ENCODE measurements at regions of chr11 and their contacts with region 1.

Region 1: GRCh38 chr11:65615229-65615941 is at the start of gene PCNX3:
- DNase-seq: peak; percentile 99 to 100 (median 100)
- ATAC-seq: peak; percentile 87
- H3K4me3 ChIP-seq: peak within 1 kb of the TSS; percentile 93
- H3K4me3 Mint-ChIP-seq: peak within 1 kb of the TSS; percentile 98
- H3K27ac ChIP-seq: peak within 1 kb of the TSS; percentile 94
- H3K27ac Mint-ChIP-seq: peak within 1 kb of the TSS; percentile 93
- H3K4me1 ChIP-seq: peaks cover 67% of the 10 kb centered on the region
- H3K4me1 Mint-ChIP-seq: peaks cover 46% of the 10 kb centered on the region
- H3K27me3 ChIP-seq: no peaks in the 10 kb centered on the region
- H3K27me3 Mint-ChIP-seq: no peaks in the 10 kb centered on the region
- CTCF ChIP-seq: no peak
- total RNA-seq, gene PCNX3: 37.3 to 40.5 TPM

Region 2: GRCh38 chr11:65540297-65541092 is 74.9 kb before region 1 on chr11:
- CTCF ChIA-PET with region 1: interaction called, 7 read pairs
- POLR2A ChIA-PET with region 1: interaction called, 32 read pairs
- intact Hi-C with region 1: no loop called
- DNase-seq: peak; percentile 81 to 94 (median 85)
- ATAC-seq: peak; percentile 82
- H3K4me3 ChIP-seq: peak overlapping the region; percentile 80
- H3K4me3 Mint-ChIP-seq: peak overlapping the region; percentile 90
- H3K27ac ChIP-seq: peak overlapping the region; percentile 14 to 64
- H3K27ac Mint-ChIP-seq: peak overlapping the region; percentile 65
- H3K4me1 ChIP-seq: peaks cover 23% of the 10 kb centered on the region
- H3K4me1 Mint-ChIP-seq: peaks cover 25% of the 10 kb centered on the region
- H3K27me3 ChIP-seq: no peaks in the 10 kb centered on the region
- H3K27me3 Mint-ChIP-seq: no peaks in the 10 kb centered on the region
- CTCF ChIP-seq: peak; percentile 79

Region 3: DNA sequence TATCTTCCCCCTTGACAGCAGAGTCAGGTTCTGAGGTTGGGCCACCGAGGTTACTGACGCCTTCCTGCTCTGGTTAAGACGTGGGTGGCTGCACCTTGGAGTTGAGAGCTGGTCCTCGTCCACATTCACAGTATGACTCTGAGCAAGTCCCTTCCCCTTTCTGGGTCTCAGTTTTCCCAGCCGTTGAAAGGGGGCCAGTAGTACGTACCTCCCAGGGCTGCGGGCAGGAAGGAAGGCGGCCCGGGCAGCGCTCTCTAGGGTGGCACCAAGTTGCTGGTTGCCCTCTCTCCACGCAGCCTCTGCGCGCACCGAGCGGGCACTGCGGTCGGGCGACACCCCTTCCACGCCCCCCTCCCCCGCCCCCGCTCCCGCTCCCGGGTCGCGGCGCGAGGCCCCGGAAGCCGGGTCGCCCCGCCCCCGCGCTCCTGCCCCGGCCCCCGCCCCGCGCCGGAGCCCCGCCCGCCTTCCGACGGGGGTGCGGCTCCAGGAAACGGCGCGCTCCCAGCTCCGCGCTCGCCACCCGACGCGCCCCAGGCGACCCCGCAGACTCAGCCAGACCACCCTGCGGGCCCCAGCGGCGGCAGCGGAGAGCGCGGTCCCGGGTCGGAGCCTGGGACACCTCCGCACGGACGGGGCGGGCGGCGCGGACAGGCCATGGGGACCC is 39.7 kb before region 1 on chr11 and contains the start of gene EHBP1L1:
- CTCF ChIA-PET with region 1: interaction called, 3 read pairs
- POLR2A ChIA-PET with region 1: interaction called, 60 read pairs
- intact Hi-C with region 1: loop called (anchors 1 to 2 kb)
- DNase-seq: peak; percentile 60 to 91 (median 79)
- ATAC-seq: peak; percentile 30
- H3K4me3 ChIP-seq: peak within 1 kb of the TSS; percentile 89
- H3K4me3 Mint-ChIP-seq: peak within 1 kb of the TSS; percentile 98
- H3K27ac ChIP-seq: peak within 1 kb of the TSS; percentile 87 to 99
- H3K27ac Mint-ChIP-seq: peak within 1 kb of the TSS; percentile 98
- H3K4me1 ChIP-seq: peaks cover 77% of the 10 kb centered on the region
- H3K4me1 Mint-ChIP-seq: peaks cover 57% of the 10 kb centered on the region
- H3K27me3 ChIP-seq: no peaks in the 10 kb centered on the region
- H3K27me3 Mint-ChIP-seq: no peaks in the 10 kb centered on the region
- CTCF ChIP-seq: no peak
- total RNA-seq, gene EHBP1L1: 82.6 to 88.5 TPM

Region 4: DNA sequence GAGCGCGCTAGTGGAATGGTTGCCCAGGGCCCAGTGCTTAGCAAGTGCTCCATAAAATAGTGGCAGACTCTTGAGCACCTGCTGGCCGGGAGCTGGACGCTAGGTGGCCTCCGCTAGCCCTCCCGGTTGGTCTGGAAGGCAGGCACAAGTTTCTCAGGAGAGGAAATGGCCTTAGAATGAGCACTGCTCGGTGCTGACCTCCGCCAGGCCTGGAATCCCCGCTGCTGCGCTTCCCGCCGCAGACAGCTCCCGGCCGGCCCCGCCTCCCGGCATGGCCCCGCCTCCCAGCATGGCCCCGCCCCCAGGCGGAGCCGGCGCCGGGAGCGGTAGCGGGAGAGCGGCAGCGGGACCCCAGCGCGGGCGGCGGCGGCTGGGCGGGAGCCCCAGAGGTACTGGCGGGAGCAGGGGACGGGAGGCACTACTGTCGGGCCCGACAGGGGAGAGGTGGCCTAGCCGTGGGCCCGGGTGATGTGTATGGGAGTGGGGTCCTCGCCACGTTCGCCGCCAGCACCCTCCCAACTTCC is 22.5 kb after region 1 on chr11 and contains the start of gene SIPA1:
- CTCF ChIA-PET with region 1: interaction called, 6 read pairs
- POLR2A ChIA-PET with region 1: interaction called, 50 read pairs
- intact Hi-C with region 1: loop called (anchors 1 to 2 kb)
- DNase-seq: peak; percentile 50 to 90 (median 68)
- ATAC-seq: peak; percentile 43
- H3K4me3 ChIP-seq: peak within 1 kb of the TSS; percentile 100
- H3K4me3 Mint-ChIP-seq: peak within 1 kb of the TSS; percentile 97
- H3K27ac ChIP-seq: peak within 1 kb of the TSS; percentile 92 to 95
- H3K27ac Mint-ChIP-seq: peak within 1 kb of the TSS; percentile 100
- H3K4me1 ChIP-seq: peaks cover 74% of the 10 kb centered on the region
- H3K4me1 Mint-ChIP-seq: peaks cover 60% of the 10 kb centered on the region
- H3K27me3 ChIP-seq: no peaks in the 10 kb centered on the region
- H3K27me3 Mint-ChIP-seq: no peaks in the 10 kb centered on the region
- CTCF ChIP-seq: no peak
- total RNA-seq, gene SIPA1: 272 to 298 TPM

Region 5: GRCh38 chr11:65662799-65663638 is 47.6 kb after region 1 on chr11 and contains the start of gene RELA:
- CTCF ChIA-PET with region 1: no interaction called
- POLR2A ChIA-PET with region 1: interaction called, 79 read pairs
- intact Hi-C with region 1: loop called (anchors 1 kb)
- DNase-seq: peak; percentile 79 to 96 (median 89)
- ATAC-seq: peak; percentile 83
- H3K4me3 ChIP-seq: peak within 1 kb of the TSS; percentile 97
- H3K4me3 Mint-ChIP-seq: peak within 1 kb of the TSS; percentile 92
- H3K27ac ChIP-seq: peak within 1 kb of the TSS; percentile 96 to 97
- H3K27ac Mint-ChIP-seq: peak within 1 kb of the TSS; percentile 94
- H3K4me1 ChIP-seq: peaks cover 59% of the 10 kb centered on the region
- H3K4me1 Mint-ChIP-seq: peaks cover 33% of the 10 kb centered on the region
- H3K27me3 ChIP-seq: no peaks in the 10 kb centered on the region
- H3K27me3 Mint-ChIP-seq: no peaks in the 10 kb centered on the region
- CTCF ChIP-seq: no peak
- total RNA-seq, gene RELA: 379 to 382 TPM

Measured in CD4-positive, alpha-beta T cell (primary cell).